ENCODE measurements at regions of chr19 and their contacts with region 1.

Region 1: GRCh38 chr19:737581-738093 is 13.3 kb upstream of the MISP start:
- DNase-seq: no peak
- ATAC-seq: peak in 3 of 4 donors; percentile 42 to 56 (median 52)
- H3K4me3 ChIP-seq: no peak overlapping the region
- H3K27ac ChIP-seq: no peak overlapping the region
- H3K4me1 ChIP-seq: peaks cover 0 to 11% (median 1%) of the 10 kb centered on the region in 12 donors
- H3K27me3 ChIP-seq: no peaks in the 10 kb centered on the region
- CTCF ChIP-seq: peak; percentile 33 to 67 (median 48)
- POLR2A ChIP-seq: no peak

Region 2: DNA sequence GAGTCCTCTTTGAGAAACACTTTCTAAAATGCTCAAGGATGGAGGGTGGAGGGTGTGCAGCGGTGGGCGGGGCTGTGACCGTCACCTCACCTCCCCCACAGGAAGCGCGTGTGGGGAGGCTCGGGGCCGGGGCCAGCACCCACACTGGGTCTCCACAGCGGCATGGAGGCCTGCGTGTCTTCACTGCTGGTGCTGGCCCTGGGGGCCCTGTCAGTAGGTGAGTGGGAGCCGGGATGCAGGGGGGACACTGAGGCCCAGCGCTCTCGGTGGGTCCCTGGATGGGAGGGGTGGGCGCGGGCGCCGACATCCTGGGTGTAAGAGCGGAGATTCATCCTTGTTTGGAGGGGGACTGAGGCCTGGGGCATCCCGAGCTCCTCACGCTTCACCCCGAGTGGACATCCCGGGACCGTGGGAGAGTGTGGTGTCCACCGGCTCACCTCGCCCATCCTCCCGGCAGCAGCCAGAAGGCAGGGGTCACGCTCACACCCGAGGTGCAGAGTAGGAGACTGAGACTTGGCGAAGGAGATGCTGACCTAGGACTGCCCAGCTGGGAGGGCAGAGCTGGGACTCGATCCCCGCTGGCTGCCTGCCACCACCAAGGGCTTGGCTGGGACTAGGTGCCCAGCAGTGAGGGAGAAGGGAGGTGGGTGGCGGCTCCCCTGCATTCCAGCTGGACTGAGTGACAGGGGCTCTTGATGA is 193.6 kb before region 1 on chr19 and contains the start of gene GZMM:
- intact Hi-C with region 1: loop called in 2 of 10 experiments (anchors 10 kb)
- DNase-seq: peak in 1 of 5 donors; percentile 72
- ATAC-seq: peak in 3 of 4 donors; percentile 20 to 43 (median 40)
- H3K4me3 ChIP-seq: peak within 1 kb of the TSS in 1 of 12 donors; percentile 46
- H3K27ac ChIP-seq: peak within 1 kb of the TSS in 1 of 12 donors; percentile 27
- H3K4me1 ChIP-seq: peaks cover 0 to 13% (median under 1%) of the 10 kb centered on the region in 12 donors
- H3K27me3 ChIP-seq: no peaks in the 10 kb centered on the region
- CTCF ChIP-seq: no peak
- POLR2A ChIP-seq: no peak
- total RNA-seq, gene GZMM: 0.40 to 3.0 (median 0.87) TPM in 4 of 9 donors, not detected in the others

Region 3: DNA sequence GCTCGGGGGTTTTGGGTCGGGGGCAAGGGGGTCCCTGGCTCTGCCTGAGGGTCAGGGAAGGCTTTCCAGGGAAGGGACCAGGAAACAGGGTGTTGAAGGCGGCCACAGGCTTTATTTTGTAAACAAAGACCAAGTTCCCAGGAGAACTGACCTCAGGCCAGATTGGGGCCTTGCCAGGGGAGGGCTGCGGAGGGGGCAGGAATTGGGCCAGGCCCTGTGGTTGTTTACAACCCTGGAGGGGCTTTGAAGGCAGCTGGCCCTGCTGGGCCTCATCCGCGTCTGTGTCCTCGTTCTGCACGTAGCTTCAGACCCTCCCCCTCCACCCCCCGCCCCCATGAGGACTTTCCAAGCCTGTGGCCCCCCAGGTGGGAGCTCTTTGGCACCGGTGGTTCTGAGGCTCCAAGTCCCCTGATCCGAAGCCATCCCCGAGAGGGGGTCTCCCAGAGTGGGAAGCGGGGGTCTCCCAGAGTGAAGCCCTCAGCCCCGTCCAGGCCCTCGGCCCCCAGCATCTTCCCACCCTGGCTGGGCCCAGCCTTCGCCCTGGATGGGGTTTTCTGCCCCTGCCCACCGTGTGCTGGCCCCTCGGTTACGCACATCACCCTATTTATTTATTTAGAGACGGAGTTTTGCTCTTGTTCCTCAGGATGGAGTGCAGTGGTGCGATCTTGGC is 178.7 kb before region 1 on chr19:
- intact Hi-C with region 1: loop called in 1 of 10 experiments (anchors 10 kb)
- DNase-seq: peak in 4 of 5 donors; percentile 53 to 73 (median 63)
- ATAC-seq: peak; percentile 34 to 58 (median 57)
- H3K4me3 ChIP-seq: no peak overlapping the region
- H3K27ac ChIP-seq: peak overlapping the region in 10 of 12 donors; percentile 13 to 64 (median 48)
- H3K4me1 ChIP-seq: peaks cover 0 to 23% (median 12%) of the 10 kb centered on the region in 12 donors
- H3K27me3 ChIP-seq: no peaks in the 10 kb centered on the region
- CTCF ChIP-seq: no peak
- POLR2A ChIP-seq: no peak

Region 4: DNA sequence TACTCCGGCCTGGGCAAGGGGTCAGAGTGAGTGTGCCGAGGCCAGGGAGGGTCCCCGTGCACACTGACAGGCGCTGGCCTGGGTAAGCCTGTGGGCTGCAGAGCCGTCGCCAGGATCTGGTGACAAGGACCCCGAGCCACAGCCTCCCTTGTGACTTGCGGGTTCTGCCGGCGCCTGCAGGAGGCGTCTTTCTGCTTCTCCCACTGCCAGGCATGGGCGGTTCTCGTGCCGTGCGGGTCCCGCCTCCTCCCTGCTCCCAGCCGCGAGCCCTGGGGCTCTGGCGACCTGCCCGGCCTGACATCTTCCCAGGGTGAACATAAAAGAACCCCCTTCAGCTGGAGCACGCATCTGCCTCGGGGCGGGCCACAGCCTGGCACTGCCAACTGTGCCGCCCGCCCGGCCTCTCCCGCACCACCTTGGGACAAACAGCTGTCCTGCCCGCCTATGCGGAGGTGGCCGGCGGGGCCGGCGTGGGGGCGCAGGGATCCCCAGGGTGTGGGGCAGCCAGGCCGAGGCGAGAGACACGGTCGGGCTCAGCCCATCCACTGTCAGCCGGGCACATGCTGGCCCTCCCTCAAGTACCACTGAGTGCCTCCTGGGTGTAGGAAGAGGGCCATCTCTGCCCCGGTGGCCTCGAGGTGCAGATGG is 149.4 kb before region 1 on chr19:
- intact Hi-C with region 1: loop called in 1 of 10 experiments (anchors 10 kb)
- DNase-seq: peak; percentile 73 to 87 (median 84)
- ATAC-seq: peak; percentile 14 to 62 (median 31)
- H3K4me3 ChIP-seq: peak overlapping the region in 1 of 12 donors; percentile 16
- H3K27ac ChIP-seq: peak overlapping the region in 8 of 12 donors; percentile 10 to 69 (median 32)
- H3K4me1 ChIP-seq: peaks cover 0 to 42% (median 21%) of the 10 kb centered on the region in 12 donors
- H3K27me3 ChIP-seq: peaks cover 15 to 51% (median 29%) of the 10 kb centered on the region in 9 donors
- CTCF ChIP-seq: peak; percentile 32 to 61 (median 43)
- POLR2A ChIP-seq: no peak

Region 5: GRCh38 chr19:703651-704446 is 33.8 kb before region 1 on chr19:
- intact Hi-C with region 1: loop called in 1 of 10 experiments (anchors 5 kb)
- DNase-seq: peak; percentile 74 to 93 (median 84)
- ATAC-seq: peak; percentile 75 to 92 (median 86)
- H3K4me3 ChIP-seq: peak overlapping the region in 8 of 12 donors; percentile 15 to 50 (median 34)
- H3K27ac ChIP-seq: peak overlapping the region in 6 of 12 donors; percentile 17 to 45 (median 36)
- H3K4me1 ChIP-seq: peaks cover 0 to 27% (median 9%) of the 10 kb centered on the region in 12 donors
- H3K27me3 ChIP-seq: peaks cover 0 to 16% (median 0%) of the 10 kb centered on the region in 9 donors
- CTCF ChIP-seq: no peak
- POLR2A ChIP-seq: peak in 1 of 2 donors; percentile 20